Heart right ventricle (tissue), 16 donors: ENCODE measurements at regions of chr5 and their contacts with region 1.

Region 1: DNA sequence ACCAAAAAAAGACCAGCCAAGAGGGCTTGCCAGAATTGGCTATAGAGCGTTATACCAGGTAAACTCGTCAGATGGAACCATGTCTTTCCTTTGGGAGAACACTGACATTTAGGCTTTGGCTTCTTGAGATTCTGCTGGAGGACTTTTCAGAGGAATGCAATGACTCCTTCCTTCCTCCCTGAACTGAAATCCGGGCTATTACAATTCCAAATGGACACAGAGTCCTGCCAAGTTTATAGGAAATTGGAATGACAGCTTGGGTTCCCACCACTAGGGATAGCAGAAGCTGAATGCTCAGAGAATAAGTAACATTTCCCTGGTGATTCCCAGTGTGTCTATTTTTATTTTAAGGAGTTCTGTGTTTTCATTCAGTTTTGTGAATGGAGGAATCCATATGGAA is 143.0 kb downstream of the FGF1 start:
- DNase-seq: peak in 1 of 2 donors; percentile 61
- ATAC-seq: peak; percentile 71 to 87 (median 78)
- H3K4me3 ChIP-seq: no peak overlapping the region
- H3K27ac ChIP-seq: peak overlapping the region; percentile 65 to 90 (median 78)
- H3K4me1 ChIP-seq: peaks cover 19 to 77% (median 48%) of the 10 kb centered on the region in 9 donors
- H3K27me3 ChIP-seq: no peaks in the 10 kb centered on the region
- CTCF ChIP-seq: peak; percentile 8 to 52 (median 28)

Region 2: GRCh38 chr5:142151436-142152383 is 391.2 kb before region 1 on chr5:
- intact Hi-C with region 1: loop called in 9 of 10 experiments (anchors 1 to 5 kb)
- DNase-seq: peak in 1 of 2 donors; percentile 80
- ATAC-seq: peak in 7 of 8 donors; percentile 59 to 75 (median 70)
- H3K4me3 ChIP-seq: no peak overlapping the region
- H3K27ac ChIP-seq: peak overlapping the region in 2 of 10 donors; percentile 16 to 24
- H3K4me1 ChIP-seq: peaks cover 0 to 12% (median 7%) of the 10 kb centered on the region in 9 donors
- H3K27me3 ChIP-seq: no peaks in the 10 kb centered on the region
- CTCF ChIP-seq: peak; percentile 79 to 93 (median 85)

Region 3: DNA sequence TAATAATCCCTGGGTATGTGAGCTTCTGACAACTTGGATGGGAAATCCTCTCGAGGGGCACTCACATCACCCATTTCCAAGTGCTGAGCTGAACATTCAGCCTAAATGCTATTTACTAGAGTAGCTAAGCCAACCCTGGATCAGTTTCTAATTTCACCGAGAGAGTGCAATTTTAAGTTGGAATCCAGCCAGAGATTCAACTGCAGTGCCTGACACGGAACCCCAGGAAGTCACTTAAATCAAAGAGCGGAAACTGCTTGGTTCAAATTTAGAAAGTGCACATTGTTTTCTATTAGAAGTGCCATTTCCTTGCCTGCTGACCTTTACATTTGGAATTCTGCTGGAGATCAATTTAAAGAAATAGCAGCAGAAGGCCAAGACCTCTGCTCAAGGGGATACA is 226.9 kb before region 1 on chr5:
- intact Hi-C with region 1: loop called in 8 of 10 experiments (anchors 5 to 10 kb)
- DNase-seq: peak in 1 of 2 donors; percentile 55
- ATAC-seq: peak in 7 of 8 donors; percentile 38 to 62 (median 43)
- H3K4me3 ChIP-seq: peak overlapping the region in 5 of 10 donors; percentile 3 to 25 (median 10)
- H3K27ac ChIP-seq: peak overlapping the region in 8 of 10 donors; percentile 46 to 95 (median 80)
- H3K4me1 ChIP-seq: peaks cover 27 to 100% (median 83%) of the 10 kb centered on the region in 9 donors
- H3K27me3 ChIP-seq: peaks cover 0 to 6% (median 0%) of the 10 kb centered on the region in 7 donors
- CTCF ChIP-seq: no peak

Region 4: DNA sequence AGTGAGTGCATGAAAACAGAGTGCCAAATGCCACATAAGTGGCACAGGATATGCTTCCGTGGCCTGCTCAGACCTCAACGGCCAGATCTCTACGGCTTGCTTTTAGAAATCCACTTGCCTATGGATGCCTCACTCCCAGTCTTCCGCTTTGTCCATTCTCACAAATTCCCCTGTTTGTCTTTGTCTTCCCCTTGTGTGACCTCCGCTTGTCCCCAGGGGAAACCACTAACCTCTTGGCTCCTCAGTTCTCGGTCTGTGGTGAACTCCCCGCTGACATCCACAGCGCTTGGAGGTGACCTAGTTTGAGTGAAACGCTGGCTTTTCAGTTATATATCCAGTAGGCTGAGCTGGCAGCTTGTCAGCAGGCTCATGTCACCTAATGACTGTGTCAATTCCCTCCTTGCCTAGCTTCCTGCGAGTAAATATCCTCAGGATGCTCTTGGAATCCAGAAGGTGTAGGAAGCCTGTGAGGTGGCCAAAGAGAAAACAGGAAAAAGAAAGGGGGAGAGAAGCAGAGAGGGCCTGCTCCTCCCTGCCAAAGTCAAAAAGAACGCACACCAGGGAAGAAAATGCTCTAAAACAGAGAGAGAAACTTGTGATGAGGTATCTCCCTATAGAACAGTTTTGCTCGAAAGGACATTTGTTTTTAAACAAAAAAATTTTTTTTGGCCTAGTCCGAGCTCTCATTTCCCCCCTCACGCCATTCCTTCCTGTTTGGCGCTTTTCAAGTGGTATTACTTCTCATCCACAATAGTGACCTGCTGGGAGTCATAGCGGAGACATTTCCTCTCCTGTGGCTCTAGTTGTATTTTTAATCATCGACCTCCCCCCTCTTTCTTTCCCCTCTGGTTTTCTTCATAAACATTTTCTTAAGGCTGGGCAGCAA is 116.5 kb before region 1 on chr5:
- intact Hi-C with region 1: loop called in 8 of 10 experiments (anchors 5 to 10 kb)
- DNase-seq: peak; percentile 60 to 85
- ATAC-seq: peak; percentile 67 to 84 (median 78)
- H3K4me3 ChIP-seq: peak overlapping the region in 1 of 10 donors; percentile 18
- H3K27ac ChIP-seq: peak overlapping the region in 9 of 10 donors; percentile 35 to 76 (median 64)
- H3K4me1 ChIP-seq: peaks cover 5 to 55% (median 33%) of the 10 kb centered on the region in 9 donors
- H3K27me3 ChIP-seq: no peaks in the 10 kb centered on the region
- CTCF ChIP-seq: no peak

Region 5: DNA sequence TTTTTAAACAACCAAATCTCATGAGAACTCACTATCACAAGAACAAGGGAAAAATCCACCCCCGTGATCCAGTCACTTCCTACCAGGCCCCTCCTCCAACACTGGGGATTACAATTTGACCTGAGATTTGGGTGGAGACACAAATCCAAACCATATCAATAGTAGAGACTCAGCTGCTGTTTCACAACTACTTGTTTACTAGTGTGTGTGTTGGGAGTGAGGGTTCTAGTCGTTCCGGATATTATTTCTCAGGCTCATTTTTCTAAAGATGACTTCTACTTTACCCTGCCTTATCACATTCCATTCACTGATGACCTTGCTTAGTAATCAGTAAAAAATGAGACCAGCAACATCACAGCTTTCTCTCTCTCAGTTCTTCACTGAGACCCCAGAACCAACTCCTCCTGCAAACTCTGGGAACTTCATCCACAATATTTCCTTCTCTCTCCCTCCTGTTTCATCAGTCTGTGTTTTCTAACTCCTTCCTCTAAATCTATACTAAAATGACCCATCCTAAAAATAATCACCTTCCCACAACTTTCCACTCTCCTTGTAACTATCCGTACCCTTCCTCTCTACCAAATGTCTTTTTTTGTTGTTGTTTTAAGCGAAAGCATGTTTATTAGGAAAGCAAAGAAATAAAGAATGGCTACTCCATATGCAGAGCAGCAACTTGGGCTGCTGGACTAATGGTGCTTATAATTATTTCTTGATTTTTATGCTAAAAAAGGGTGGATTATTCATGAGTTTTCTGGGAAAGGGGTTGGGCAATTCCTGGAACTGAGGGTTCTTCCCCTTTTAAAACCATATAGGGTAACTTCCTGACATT is 96.6 kb before region 1 on chr5:
- intact Hi-C with region 1: loop called in 2 of 10 experiments (anchors 5 to 10 kb)
- DNase-seq: peak in 1 of 2 donors; percentile 19
- ATAC-seq: peak in 7 of 8 donors; percentile 31 to 63 (median 44)
- H3K4me3 ChIP-seq: no peak overlapping the region
- H3K27ac ChIP-seq: peak overlapping the region in 9 of 10 donors; percentile 3 to 67 (median 46)
- H3K4me1 ChIP-seq: peaks cover 0 to 27% (median 19%) of the 10 kb centered on the region in 9 donors
- H3K27me3 ChIP-seq: no peaks in the 10 kb centered on the region
- CTCF ChIP-seq: no peak

Region 6: GRCh38 chr5:142499591-142500226 is 43.2 kb before region 1 on chr5:
- intact Hi-C with region 1: loop called in 2 of 10 experiments (anchors 5 kb)
- DNase-seq: no peak
- ATAC-seq: peak in 3 of 8 donors; percentile 9 to 25 (median 22)
- H3K4me3 ChIP-seq: no peak overlapping the region
- H3K27ac ChIP-seq: no peak overlapping the region
- H3K4me1 ChIP-seq: peaks cover 0 to 27% (median 0%) of the 10 kb centered on the region in 9 donors
- H3K27me3 ChIP-seq: no peaks in the 10 kb centered on the region
- CTCF ChIP-seq: no peak

Region 7: DNA sequence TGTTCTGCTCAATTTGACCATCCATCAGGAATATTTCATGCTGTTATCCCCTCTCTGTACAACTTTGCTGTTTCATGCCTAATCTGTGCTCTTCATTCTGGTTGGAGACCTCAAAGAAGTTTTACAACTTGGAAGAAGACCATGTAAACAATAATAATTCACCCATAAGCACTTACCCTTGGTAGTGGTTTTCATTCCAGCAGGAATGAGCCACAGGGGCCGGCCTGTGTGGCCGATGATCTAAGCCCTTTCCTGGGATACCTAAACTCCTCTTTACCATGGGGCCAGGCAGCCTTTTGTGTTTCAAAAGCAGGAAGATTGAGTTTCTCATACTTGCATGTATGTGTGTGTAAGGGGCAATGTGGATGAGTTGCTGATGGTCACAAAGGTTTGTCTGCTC is 22.0 kb before region 1 on chr5:
- intact Hi-C with region 1: no loop called
- DNase-seq: no peak
- ATAC-seq: no peak
- H3K4me3 ChIP-seq: no peak overlapping the region
- H3K27ac ChIP-seq: no peak overlapping the region
- H3K4me1 ChIP-seq: peaks cover 0 to 8% (median 0%) of the 10 kb centered on the region in 9 donors
- H3K27me3 ChIP-seq: no peaks in the 10 kb centered on the region
- CTCF ChIP-seq: no peak

Region 8: GRCh38 chr5:142735331-142736246 is 192.7 kb after region 1 on chr5:
- intact Hi-C with region 1: no loop called
- DNase-seq: no peak
- ATAC-seq: peak in 6 of 8 donors; percentile 26 to 56 (median 34)
- H3K4me3 ChIP-seq: no peak overlapping the region
- H3K27ac ChIP-seq: no peak overlapping the region
- H3K4me1 ChIP-seq: peaks cover 3 to 41% (median 30%) of the 10 kb centered on the region in 9 donors
- H3K27me3 ChIP-seq: no peaks in the 10 kb centered on the region
- CTCF ChIP-seq: peak in 1 of 9 donors; percentile 11

Region 9: DNA sequence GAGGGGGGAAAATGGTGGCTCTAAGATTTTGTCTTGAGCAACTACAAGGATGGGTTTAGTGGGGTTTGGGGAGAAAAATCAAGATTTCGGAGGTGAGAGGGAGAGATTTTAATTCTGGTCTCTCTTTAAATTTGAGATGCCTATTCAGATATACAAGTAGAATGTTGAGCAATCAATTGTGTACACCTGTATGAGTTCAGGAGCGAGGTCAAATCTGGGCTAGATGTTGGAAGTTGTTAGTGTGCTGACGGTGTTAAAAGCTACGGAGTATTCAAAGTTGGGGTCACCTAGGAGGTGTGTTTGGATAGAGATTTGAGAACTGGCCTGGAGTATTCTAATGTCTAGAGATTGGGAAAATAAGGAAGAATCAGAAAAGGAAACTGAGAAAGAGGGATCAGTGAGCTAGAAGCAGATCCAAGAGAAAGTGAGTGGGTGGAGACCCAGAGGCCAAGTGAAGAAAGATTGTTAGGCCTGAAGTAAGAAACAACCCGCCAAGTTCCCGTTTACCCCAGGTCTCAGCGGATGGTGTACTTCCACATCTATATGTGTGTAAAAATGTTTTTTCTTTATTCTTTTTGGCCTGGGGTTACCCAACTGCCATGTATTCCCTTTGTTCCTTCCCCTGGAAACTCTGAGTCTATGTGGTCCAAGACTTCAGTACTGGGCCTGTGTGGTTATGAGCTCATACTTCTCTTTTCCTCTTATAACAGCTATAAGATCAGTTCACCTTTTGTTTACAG is 215.3 kb after region 1 on chr5:
- intact Hi-C with region 1: no loop called
- DNase-seq: no peak
- ATAC-seq: peak in 4 of 8 donors; percentile 24 to 54 (median 48)
- H3K4me3 ChIP-seq: no peak overlapping the region
- H3K27ac ChIP-seq: peak overlapping the region in 1 of 10 donors; percentile 11
- H3K4me1 ChIP-seq: peaks cover 6 to 23% (median 11%) of the 10 kb centered on the region in 9 donors
- H3K27me3 ChIP-seq: no peaks in the 10 kb centered on the region
- CTCF ChIP-seq: no peak

Region 10: DNA sequence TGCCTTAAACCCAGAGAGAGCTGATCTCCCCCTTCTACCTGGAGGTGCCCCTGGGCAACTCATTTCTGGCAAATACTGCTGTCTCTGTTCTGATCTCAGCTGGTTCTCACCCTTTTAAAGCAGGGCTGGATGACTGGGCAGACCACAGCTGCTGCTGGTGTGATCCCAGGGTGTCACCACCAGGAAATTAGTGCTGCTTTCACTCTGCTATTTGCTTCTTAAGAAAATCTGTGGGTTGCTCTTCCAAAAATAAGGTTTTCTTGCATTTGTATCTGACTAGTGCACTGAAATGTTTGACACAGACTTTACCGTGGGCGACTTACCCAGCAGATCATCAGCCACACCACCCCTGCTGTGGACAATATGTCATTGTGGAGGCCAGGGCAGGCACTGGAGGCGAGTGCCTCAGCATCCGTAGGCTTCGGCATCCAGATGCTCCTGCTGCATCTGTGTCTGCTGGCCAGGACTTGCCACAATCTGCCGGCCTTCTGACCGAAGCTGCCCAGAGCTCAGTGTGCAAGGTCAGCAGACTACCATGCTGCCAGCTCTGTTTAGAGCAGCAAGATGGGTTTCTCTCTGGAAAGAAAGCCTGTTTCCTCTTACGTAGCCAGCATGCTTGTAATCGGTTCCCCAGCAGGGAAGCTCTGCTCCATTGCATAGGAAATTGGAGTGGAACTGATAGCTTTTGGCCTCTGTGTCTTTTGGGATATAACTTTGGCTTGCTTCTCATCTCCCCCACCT is 240.9 kb after region 1 on chr5:
- intact Hi-C with region 1: no loop called
- DNase-seq: peak; percentile 44 to 56
- ATAC-seq: peak; percentile 27 to 77 (median 62)
- H3K4me3 ChIP-seq: peak overlapping the region in 7 of 10 donors; percentile 0 to 36 (median 19)
- H3K27ac ChIP-seq: peak overlapping the region; percentile 36 to 91 (median 78)
- H3K4me1 ChIP-seq: peaks cover 35 to 94% (median 84%) of the 10 kb centered on the region in 9 donors
- H3K27me3 ChIP-seq: no peaks in the 10 kb centered on the region
- CTCF ChIP-seq: peak in 1 of 9 donors; percentile 9